ENCODE measurements at regions of chr1 and their contacts with region 1.

Region 1: DNA sequence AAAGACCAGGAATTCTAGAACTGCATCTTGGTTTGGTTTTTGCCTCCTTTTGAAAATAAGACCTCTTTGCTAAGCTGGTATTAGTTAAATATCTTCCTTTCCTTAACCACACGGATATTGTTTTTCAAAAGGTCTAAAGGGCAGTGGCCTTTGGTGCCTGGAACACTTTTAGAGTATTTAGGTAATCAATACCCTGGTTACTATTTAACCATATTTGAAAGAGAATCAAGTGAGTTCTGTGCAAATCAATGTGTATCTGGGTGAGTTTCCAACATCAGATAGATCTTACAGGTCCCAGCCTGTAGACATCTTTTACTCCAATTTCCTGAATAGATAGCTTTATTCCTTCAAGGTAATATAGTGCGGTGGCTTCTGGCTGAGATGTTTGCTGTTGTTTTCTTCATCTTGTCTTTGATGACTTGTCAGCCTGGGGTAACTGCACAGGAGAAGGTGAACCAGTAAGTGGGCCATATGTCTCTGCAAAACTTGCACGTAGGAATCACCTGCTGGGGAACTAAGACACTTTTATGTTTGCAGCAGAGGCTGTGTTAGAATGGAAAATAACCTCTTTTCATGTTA is at the start of gene C8A:
- DNase-seq: peak; percentile 87
- ATAC-seq: peak; percentile 96
- H3K4me3 ChIP-seq: peak within 1 kb of the TSS; percentile 46 to 62 (median 49); a peak in 5 of 6 replicates
- H3K27ac ChIP-seq: peak within 1 kb of the TSS; percentile 89
- H3K4me1 ChIP-seq: peaks cover 79% of the 10 kb centered on the region
- H3K27me3 ChIP-seq: no peaks in the 10 kb centered on the region
- CTCF ChIP-seq: no peak
- EP300 ChIP-seq: peak in 1 of 2 experiments; percentile 97; a peak in 2 of 4 replicates
- POLR2A ChIP-seq: peak in 1 of 2 experiments; percentile 39; a peak in 3 of 4 replicates
- RAD21 ChIP-seq: no peak
- total RNA-seq, gene C8A: 8.6 and 15.0 TPM in 2 replicates

Region 2: GRCh38 chr1:57061369-57061768 is 206.8 kb after region 1 on chr1:
- CTCF ChIA-PET with region 1: no interaction called
- POLR2A ChIA-PET with region 1: no interaction called
- in situ Hi-C with region 1: no loop called
- intact Hi-C with region 1: loop called (anchors 2 kb)
- DNase-seq: peak; percentile 76
- ATAC-seq: peak; percentile 93
- H3K4me3 ChIP-seq: 0 out of 6 replicates have a peak overlapping the region, but pooled peaks of 1 of the 3 experiments have one; percentile 13
- H3K27ac ChIP-seq: no peak overlapping the region
- H3K4me1 ChIP-seq: peaks cover 59% of the 10 kb centered on the region
- H3K27me3 ChIP-seq: no peaks in the 10 kb centered on the region
- CTCF ChIP-seq: peak; percentile 87
- EP300 ChIP-seq: no peak
- POLR2A ChIP-seq: no peak
- RAD21 ChIP-seq: peak; percentile 71

Measured in HepG2 (cell line).